ENCODE measurements at regions of chrX and their contacts with region 1.

Region 1: DNA sequence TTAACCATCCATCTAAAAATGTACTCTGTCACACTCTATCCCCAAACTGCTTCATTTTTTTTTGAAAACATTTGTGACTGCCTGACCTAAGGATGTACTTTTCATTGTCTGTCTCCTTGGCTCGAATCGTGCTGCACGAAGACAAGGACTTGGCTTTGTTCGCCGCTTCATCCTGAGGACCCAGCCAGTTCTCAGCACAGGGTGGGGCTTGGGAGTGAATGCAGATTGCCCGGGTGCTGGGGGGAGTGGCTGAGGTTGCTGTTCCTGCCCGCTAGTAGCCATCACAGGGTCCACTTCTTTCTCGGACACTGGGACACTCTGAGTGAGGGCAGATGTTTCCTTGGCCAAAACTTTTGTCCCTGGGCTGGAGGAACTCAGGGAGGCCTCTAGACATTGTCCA is 70.1 kb upstream of the CLCN4 start:
- DNase-seq: no peak
- ATAC-seq: no peak
- H3K4me3 ChIP-seq: no peak overlapping the region
- H3K27ac ChIP-seq: no peak overlapping the region
- H3K4me1 ChIP-seq: peaks cover 21% of the 10 kb centered on the region
- H3K27me3 ChIP-seq: no peaks in the 10 kb centered on the region
- CTCF ChIP-seq: no peak
- EP300 ChIP-seq: no peak
- POLR2A ChIP-seq: no peak
- RAD21 ChIP-seq: no peak

Region 2: DNA sequence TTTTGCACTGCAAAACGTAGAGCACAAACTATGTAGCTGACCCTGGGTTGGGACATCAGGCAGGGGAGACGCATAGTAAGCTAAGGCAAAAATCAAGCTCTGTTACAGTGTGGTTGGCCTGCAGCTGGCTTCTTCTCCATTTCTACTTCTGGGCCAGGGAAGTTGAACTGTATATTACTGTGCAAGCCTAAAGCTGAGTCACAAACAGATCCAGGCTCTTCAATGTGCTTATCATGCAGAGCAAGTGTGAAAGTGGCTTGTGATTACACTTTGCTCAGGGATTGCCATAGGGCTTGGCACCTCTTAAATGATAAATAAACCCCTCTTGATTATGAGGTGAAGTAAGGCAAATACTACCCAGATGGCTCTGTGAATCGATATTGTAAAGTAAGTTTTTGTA is 79.1 kb before region 1 on chrX:
- CTCF ChIA-PET with region 1: interaction called, 15 read pairs
- POLR2A ChIA-PET with region 1: interaction called, 6 read pairs
- RAD21 ChIA-PET with region 1: interaction called, 18 read pairs
- SMC1A ChIA-PET with region 1: interaction called, 37 read pairs
- in situ Hi-C with region 1: no loop called
- intact Hi-C with region 1: no loop called
- DNase-seq: no peak
- ATAC-seq: peak; percentile 1; the same call in 2 of the 3 replicates
- H3K4me3 ChIP-seq: no peak overlapping the region
- H3K27ac ChIP-seq: no peak overlapping the region
- H3K4me1 ChIP-seq: peaks cover 9% of the 10 kb centered on the region
- H3K27me3 ChIP-seq: no peaks in the 10 kb centered on the region
- CTCF ChIP-seq: no peak
- EP300 ChIP-seq: no peak
- POLR2A ChIP-seq: no peak
- RAD21 ChIP-seq: no peak

Region 3: GRCh38 chrX:10052906-10053625 is 33.6 kb before region 1 on chrX:
- CTCF ChIA-PET with region 1: interaction called, 3 read pairs
- POLR2A ChIA-PET with region 1: interaction called, 12 read pairs
- RAD21 ChIA-PET with region 1: interaction called, 7 read pairs
- SMC1A ChIA-PET with region 1: interaction called, 7 read pairs
- in situ Hi-C with region 1: no loop called
- intact Hi-C with region 1: no loop called
- DNase-seq: no peak
- ATAC-seq: peak; percentile 59
- H3K4me3 ChIP-seq: no peak overlapping the region
- H3K27ac ChIP-seq: no peak overlapping the region
- H3K4me1 ChIP-seq: no peaks in the 10 kb centered on the region
- H3K27me3 ChIP-seq: peaks cover 0 to 4% of the 10 kb centered on the region in 2 experiments; a peak in 1 of 4 replicates
- CTCF ChIP-seq: no peak
- EP300 ChIP-seq: no peak
- POLR2A ChIP-seq: no peak
- RAD21 ChIP-seq: no peak; the same call in 1 of the 2 replicates

Region 4: DNA sequence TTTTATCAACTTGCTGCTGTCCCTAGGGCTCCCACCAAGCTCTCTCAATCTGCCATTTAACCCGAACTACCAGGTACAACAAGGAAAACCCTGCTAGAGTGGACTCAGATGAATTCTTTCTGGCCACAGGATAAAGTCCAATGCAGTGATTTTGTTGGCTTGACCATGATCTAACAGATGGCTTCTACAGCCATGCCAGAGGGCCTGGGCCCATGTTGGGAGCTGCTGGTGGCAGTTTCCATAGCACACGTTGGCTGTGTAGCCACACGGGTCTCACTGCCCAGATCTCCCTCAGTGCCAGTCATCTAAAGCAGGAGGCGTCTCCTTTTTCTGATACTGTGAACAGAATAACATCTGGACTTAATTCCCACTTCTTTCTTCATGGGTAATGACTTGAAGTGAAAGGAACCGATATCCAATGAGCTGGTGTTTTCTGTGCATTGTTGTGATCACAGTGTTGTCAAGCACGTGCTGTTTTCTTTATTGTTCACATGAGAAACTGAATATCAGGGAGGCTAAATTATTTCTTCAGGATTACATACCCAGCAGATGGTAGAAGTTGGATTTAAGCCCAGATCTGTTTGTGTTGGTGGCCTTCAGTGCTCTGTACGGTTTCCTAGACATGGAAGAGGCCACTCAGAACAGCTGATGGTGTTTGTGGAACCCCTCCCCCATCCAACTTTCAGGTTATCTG is 15.1 kb before region 1 on chrX:
- CTCF ChIA-PET with region 1: no interaction called
- POLR2A ChIA-PET with region 1: interaction called, 3 read pairs
- RAD21 ChIA-PET with region 1: interaction called, 3 read pairs
- SMC1A ChIA-PET with region 1: interaction called, 21 read pairs
- in situ Hi-C with region 1: no loop called
- intact Hi-C with region 1: no loop called
- DNase-seq: no peak
- ATAC-seq: no peak
- H3K4me3 ChIP-seq: no peak overlapping the region
- H3K27ac ChIP-seq: no peak overlapping the region
- H3K4me1 ChIP-seq: no peaks in the 10 kb centered on the region
- H3K27me3 ChIP-seq: no peaks in the 10 kb centered on the region
- CTCF ChIP-seq: no peak
- EP300 ChIP-seq: no peak
- POLR2A ChIP-seq: no peak
- RAD21 ChIP-seq: no peak

Region 5: DNA sequence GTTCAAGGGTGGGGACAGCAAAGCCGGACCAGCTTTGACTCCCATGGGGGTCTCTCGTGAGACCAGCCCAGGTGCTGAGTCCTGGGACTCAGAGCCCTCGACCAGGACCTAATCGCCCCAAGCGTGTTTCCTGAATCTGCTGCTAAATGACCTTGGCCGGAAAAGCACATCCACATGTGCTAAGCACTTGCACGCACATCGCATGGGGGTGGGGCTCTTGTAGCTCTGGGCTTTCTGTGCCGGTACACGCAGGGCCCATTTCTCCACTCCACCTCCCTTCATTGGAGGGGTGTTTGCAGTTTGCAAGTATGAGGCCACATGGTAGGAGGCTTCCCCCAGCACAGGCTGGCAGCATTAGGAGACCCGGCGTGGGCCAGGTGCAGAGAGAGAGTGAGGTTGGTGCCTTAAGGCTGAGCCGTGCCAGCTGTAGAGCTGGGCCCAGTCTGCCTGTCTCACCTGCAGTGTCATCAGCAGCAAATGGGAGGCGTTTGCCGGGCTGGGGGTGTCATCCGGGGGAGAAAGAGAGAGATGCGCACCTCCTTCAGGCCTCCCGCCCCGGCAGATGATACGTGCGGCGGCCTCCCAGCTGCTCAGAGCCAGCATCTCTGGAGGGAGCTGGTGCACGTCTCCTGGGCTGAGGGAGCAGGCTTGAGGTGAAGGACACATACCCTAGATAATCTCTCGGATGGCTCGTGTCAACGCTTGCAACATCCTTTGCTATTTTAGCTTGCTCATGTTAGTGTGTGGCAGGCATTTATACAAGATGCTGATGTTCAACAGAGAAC is 24.9 kb after region 1 on chrX:
- CTCF ChIA-PET with region 1: interaction called, 56 read pairs
- POLR2A ChIA-PET with region 1: interaction called, 22 read pairs
- RAD21 ChIA-PET with region 1: interaction called, 89 read pairs
- SMC1A ChIA-PET with region 1: interaction called, 206 read pairs
- in situ Hi-C with region 1: no loop called
- intact Hi-C with region 1: loop called (anchors 1 kb)
- DNase-seq: peak; percentile 59
- ATAC-seq: peak; percentile 69
- H3K4me3 ChIP-seq: peak overlapping the region; percentile 18; the same call in 1 of the 2 replicates
- H3K27ac ChIP-seq: peak overlapping the region; percentile 87
- H3K4me1 ChIP-seq: peaks cover 47% of the 10 kb centered on the region
- H3K27me3 ChIP-seq: no peaks in the 10 kb centered on the region; a peak in 1 of 4 replicates
- CTCF ChIP-seq: no peak
- EP300 ChIP-seq: peak; percentile 46 to 63; a peak in 3 of 4 replicates
- POLR2A ChIP-seq: peak; percentile 60
- RAD21 ChIP-seq: no peak

Region 6: GRCh38 chrX:10288384-10288975 is 201.8 kb after region 1 on chrX:
- CTCF ChIA-PET with region 1: no interaction called
- POLR2A ChIA-PET with region 1: no interaction called
- RAD21 ChIA-PET with region 1: no interaction called
- SMC1A ChIA-PET with region 1: no interaction called
- in situ Hi-C with region 1: no loop called
- intact Hi-C with region 1: no loop called
- DNase-seq: no peak
- ATAC-seq: no peak
- H3K4me3 ChIP-seq: no peak overlapping the region
- H3K27ac ChIP-seq: no peak overlapping the region
- H3K4me1 ChIP-seq: no peaks in the 10 kb centered on the region
- H3K27me3 ChIP-seq: no peaks in the 10 kb centered on the region; a peak in 1 of 4 replicates
- CTCF ChIP-seq: no peak
- EP300 ChIP-seq: no peak
- POLR2A ChIP-seq: no peak
- RAD21 ChIP-seq: no peak

Measured in GM12878 (cell line).